AG04450 (cell line): ENCODE measurements at regions of chr12 and their contacts with region 1.

Region 1: GRCh38 chr12:100404769-100405407 is 48.0 kb downstream of the SLC17A8 start:
- DNase-seq: no peak
- H3K4me3 ChIP-seq: no peak overlapping the region
- H3K27ac ChIP-seq: no peak overlapping the region
- H3K27me3 ChIP-seq: no peaks in the 10 kb centered on the region
- CTCF ChIP-seq: peak; percentile 61

Region 2: GRCh38 chr12:100348657-100349454 is 56.0 kb before region 1 on chr12:
- CTCF ChIA-PET with region 1: interaction called, 11 read pairs
- POLR2A ChIA-PET with region 1: no interaction called
- DNase-seq: no peak
- H3K4me3 ChIP-seq: no peak overlapping the region
- H3K27ac ChIP-seq: no peak overlapping the region
- H3K27me3 ChIP-seq: peaks cover 3% of the 10 kb centered on the region
- CTCF ChIP-seq: peak; percentile 48

Region 3: DNA sequence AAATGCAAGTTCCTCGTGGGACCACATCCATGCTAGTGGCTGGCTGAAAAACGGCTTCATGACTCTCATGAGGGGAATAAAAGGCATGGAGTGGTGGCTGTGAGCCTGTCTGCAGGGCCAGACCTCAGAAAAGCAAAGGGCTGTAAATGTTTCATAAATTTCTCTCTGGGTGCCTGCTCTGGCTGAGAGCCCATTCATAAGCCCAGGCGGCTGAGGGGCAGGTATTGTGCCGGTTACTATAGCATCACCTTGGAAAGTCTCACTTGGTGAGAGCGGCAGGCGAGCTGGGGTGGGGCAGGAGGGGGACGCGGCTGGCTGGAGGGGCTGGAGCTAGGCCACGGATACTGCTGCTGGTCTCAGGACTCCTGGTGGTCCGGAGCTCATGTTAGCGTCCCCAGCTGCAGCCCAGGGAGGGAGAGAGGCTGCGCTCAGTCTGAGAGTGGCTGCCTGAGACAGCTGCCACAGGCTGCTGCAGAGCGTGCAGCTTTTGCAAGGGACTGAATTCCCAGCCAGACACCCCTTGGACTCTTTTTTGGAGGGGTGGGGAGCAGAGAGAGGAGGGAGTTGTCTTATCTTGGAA is 48.2 kb before region 1 on chr12 and contains the start of gene SLC17A8:
- CTCF ChIA-PET with region 1: interaction called, 10 read pairs
- POLR2A ChIA-PET with region 1: no interaction called
- DNase-seq: no peak
- H3K4me3 ChIP-seq: no peak within 1 kb of the TSS
- H3K27ac ChIP-seq: no peak within 1 kb of the TSS
- H3K27me3 ChIP-seq: peaks cover 8% of the 10 kb centered on the region
- CTCF ChIP-seq: no peak
- polyA plus RNA-seq, gene SLC17A8: not detected in 2 replicates

Region 4: DNA sequence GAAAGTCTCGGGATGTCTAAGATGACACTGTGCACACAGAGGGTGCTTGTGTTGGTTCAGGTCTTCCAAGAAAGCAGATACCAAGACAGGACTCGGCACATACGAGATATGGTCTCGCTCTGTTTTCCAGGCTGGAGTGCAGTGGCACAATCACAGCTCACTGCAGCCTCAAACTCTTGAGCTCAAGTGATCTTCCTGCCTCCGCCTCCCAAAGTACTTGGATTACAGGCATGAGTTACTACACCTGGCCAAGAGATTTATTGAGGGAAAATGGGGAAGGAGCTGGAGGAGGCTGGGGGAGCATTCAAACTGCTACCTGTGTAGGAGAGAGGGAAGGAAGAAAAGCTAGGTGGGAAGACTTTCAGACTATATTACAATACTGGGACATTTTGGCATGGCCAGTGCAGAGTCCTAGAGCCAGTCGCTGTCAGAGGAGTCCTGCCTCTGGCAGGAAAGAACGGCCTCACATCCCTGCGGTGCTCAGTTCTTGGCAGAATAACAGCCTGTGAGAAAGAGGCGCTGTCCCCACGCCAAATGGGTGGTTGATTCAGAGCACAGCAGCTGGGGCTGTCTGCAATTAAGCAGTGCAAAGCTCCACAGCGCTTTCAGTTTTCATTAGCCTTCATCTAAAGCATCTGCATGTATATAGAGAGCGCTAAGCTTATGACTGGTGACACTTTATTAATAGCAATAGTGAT is 29.7 kb before region 1 on chr12:
- CTCF ChIA-PET with region 1: interaction called, 10 read pairs
- POLR2A ChIA-PET with region 1: no interaction called
- DNase-seq: no peak
- H3K4me3 ChIP-seq: no peak overlapping the region
- H3K27ac ChIP-seq: no peak overlapping the region
- H3K27me3 ChIP-seq: no peaks in the 10 kb centered on the region
- CTCF ChIP-seq: no peak